ENCODE measurements at regions of chr19 and their contacts with region 1.

Region 1: GRCh38 chr19:23273590-23274413 is 23.6 kb upstream of the ZNF724 start:
- DNase-seq: peak; percentile 94
- ATAC-seq: peak; percentile 98
- H3K4me3 ChIP-seq: peak overlapping the region; percentile 91
- H3K27ac ChIP-seq: peak overlapping the region; percentile 31; the same call in 1 of the 2 replicates
- H3K4me1 ChIP-seq: 0 out of 2 replicates have a peak, but pooled peaks cover 6% of the 10 kb centered on the region
- H3K27me3 ChIP-seq: no peaks in the 10 kb centered on the region
- CTCF ChIP-seq: no peak

Region 2: DNA sequence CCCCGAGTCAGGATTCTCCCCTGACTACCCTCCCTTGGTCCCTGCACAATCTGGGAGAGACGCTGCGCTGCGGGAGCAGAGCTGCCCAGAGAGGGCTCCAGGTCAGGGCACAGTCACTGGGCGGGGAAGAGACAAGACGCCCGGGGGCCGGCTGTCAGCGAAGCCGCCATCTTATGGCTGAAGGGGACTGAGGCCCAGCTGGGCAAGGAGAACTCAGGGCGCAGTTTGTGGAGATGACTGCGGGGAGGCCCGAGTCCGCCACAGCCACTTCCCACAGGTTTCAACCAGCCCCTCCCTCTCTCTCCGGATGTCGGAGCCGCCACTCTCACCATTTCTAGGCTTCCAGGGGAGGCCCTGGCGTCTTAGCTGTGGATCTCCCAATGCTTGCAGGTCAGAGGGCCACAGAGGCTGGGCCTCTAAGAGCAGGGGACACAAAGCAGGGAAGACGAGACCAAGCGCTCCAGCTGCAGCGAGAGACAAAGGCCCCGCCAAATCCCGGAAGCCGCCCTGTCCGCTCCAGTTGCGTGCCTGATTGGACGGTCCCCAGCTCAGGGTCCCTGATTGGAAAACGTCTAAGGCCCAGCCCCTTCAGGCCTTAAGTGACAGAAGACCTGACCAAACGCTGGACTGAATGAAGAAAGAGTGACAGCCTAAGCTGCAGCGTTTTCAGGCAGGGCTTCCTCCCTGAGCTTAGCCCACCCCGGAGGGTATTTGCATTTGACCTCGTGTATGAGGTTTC is 23.7 kb before region 1 on chr19 and contains the start of gene ZNF724:
- CTCF ChIA-PET with region 1: no interaction called
- POLR2A ChIA-PET with region 1: interaction called, 4 read pairs
- intact Hi-C with region 1: loop called (anchors 1 kb)
- DNase-seq: peak; percentile 98
- ATAC-seq: peak; percentile 99
- H3K4me3 ChIP-seq: peak within 1 kb of the TSS; percentile 92
- H3K27ac ChIP-seq: peak within 1 kb of the TSS; percentile 82
- H3K4me1 ChIP-seq: no peaks in the 10 kb centered on the region
- H3K27me3 ChIP-seq: no peaks in the 10 kb centered on the region
- CTCF ChIP-seq: no peak
- total RNA-seq, gene ZNF724: 14.9 and 23.1 TPM in 2 replicates

Measured in PC-3 (cell line).